ENCODE measurements at regions of chr12 and their contacts with region 1.

Region 1: GRCh38 chr12:20489645-20490044 is 121.3 kb downstream of the PDE3A start:
- DNase-seq: no peak
- ATAC-seq: no peak
- H3K4me3 ChIP-seq: no peak overlapping the region
- H3K27ac ChIP-seq: no peak overlapping the region
- H3K4me1 ChIP-seq: peaks cover 3% of the 10 kb centered on the region; the same call in 1 of the 2 replicates
- H3K27me3 ChIP-seq: no peaks in the 10 kb centered on the region
- CTCF ChIP-seq: no peak

Region 2: GRCh38 chr12:20549107-20549719 is 59.6 kb after region 1 on chr12:
- CTCF ChIA-PET with region 1: no interaction called
- POLR2A ChIA-PET with region 1: no interaction called
- intact Hi-C with region 1: loop called (anchors 5 kb)
- DNase-seq: peak; percentile 48
- ATAC-seq: peak; percentile 70
- H3K4me3 ChIP-seq: no peak overlapping the region
- H3K27ac ChIP-seq: no peak overlapping the region
- H3K4me1 ChIP-seq: no peaks in the 10 kb centered on the region
- H3K27me3 ChIP-seq: 0 out of 2 replicates have a peak, but pooled peaks cover 4% of the 10 kb centered on the region
- CTCF ChIP-seq: peak; percentile 63

Measured in PC-3 (cell line).